ENCODE measurements at regions of chrX and their contacts with region 1.

Region 1: DNA sequence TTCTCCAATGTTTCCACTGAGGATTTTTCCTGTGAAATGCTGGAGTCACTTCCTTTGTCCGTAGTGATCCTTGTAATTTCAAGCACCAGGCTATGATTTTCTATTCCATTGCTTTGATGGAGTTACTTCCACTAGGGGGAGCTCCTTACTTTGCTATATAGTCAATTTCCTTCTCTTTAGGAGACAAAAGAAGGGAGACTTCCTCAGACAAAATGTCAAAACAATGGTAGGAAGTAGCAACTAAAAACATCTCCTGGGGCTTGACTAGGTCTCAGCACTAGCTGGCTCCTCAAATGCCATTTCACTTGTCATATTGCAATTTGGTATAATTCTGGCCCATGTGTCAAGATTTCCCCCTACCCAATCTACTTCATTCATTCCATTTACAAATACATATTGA is 24.1 kb downstream of the ZCCHC12 start:
- DNase-seq: no peak
- H3K4me3 ChIP-seq: no peak overlapping the region
- H3K27ac ChIP-seq: no peak overlapping the region
- H3K4me1 ChIP-seq: no peaks in the 10 kb centered on the region
- H3K27me3 ChIP-seq: no peaks in the 10 kb centered on the region
- CTCF ChIP-seq: peak; percentile 19 to 69 (median 59)
- POLR2A ChIP-seq: no peak

Region 2: GRCh38 chrX:119004920-119005524 is 157.3 kb after region 1 on chrX:
- intact Hi-C with region 1: loop called (anchors 5 kb)
- DNase-seq: peak; percentile 87
- H3K4me3 ChIP-seq: no peak overlapping the region
- H3K27ac ChIP-seq: no peak overlapping the region
- H3K4me1 ChIP-seq: no peaks in the 10 kb centered on the region
- H3K27me3 ChIP-seq: peaks cover 0 to 8% (median 0%) of the 10 kb centered on the region in 7 donors
- CTCF ChIP-seq: peak; percentile 23 to 90 (median 81)
- POLR2A ChIP-seq: no peak

Region 3: DNA sequence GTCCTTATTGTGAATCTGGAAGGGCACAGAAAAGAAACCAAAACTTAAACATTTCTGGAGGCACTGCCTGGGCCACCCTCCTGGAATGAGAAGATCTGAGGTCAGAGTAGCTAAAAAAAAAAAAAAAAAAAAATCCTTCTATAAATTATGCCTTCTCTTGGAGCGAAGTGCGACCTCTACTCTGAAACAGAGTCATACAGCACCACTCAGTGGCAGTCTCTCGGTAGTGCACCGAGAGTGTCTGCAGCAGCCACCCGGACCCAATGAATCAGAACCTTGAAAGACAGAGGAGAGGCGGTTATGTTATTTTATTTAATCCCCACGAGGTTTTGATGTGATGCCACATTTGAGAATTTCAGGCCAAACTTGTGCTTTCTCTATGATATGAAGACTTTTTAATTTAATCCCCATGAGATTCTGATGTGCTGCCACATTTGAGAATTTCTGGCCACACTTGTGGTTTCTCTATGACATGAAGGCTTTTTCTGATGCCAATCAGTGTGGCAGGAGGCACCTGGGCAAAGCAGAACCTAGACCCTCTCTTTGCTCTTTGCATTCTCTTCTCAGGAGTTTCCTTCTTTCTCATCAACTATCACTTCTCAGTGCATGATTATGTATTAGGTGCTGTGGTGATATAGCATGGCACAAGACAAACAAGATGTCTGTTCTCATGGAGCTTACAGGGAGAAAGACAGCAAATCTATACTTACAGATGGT is 219.5 kb after region 1 on chrX:
- intact Hi-C with region 1: loop called (anchors 5 kb)
- DNase-seq: no peak
- H3K4me3 ChIP-seq: no peak overlapping the region
- H3K27ac ChIP-seq: no peak overlapping the region
- H3K4me1 ChIP-seq: no peaks in the 10 kb centered on the region
- H3K27me3 ChIP-seq: no peaks in the 10 kb centered on the region
- CTCF ChIP-seq: peak; percentile 17 to 80 (median 59)
- POLR2A ChIP-seq: no peak